BJ (cell line): ENCODE measurements at regions of chr19 and their contacts with region 1.

Region 1: DNA sequence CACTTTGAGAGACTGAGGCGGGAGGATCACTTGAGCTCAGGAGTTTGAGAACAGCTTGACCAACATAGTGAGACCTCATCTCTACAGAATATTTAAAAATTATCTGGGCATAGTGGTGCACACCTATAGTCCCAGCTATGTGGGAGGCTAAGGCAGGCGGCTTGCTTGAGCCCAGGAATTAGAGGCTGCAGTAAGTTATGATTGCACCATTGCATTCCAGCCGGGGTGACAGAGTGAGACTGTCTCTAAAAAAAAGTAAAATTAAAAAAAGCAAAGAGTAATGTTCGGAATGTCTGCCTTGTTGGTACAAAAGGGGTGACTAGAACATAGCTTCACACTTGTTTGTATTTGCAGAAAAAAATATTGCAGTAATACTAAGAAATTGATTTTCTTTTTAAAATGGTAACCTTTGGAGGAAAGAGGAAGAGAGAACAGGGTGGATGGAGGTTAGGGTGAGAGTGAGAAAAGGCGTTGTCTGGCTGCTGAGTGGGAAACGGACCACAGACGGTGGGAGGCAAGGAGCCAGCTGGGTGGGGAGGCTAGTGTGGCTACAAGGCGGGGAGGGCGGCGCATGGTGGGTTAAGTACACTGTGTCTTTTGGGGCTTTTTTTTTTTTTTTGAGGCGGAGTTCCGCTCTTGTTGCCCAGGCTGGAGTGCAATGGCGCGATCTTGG is 10.2 kb downstream of the PPP1R14A start:
- DNase-seq: no peak
- H3K4me3 ChIP-seq: no peak overlapping the region
- H3K27me3 ChIP-seq: no peaks in the 10 kb centered on the region
- CTCF ChIP-seq: no peak

Region 2: DNA sequence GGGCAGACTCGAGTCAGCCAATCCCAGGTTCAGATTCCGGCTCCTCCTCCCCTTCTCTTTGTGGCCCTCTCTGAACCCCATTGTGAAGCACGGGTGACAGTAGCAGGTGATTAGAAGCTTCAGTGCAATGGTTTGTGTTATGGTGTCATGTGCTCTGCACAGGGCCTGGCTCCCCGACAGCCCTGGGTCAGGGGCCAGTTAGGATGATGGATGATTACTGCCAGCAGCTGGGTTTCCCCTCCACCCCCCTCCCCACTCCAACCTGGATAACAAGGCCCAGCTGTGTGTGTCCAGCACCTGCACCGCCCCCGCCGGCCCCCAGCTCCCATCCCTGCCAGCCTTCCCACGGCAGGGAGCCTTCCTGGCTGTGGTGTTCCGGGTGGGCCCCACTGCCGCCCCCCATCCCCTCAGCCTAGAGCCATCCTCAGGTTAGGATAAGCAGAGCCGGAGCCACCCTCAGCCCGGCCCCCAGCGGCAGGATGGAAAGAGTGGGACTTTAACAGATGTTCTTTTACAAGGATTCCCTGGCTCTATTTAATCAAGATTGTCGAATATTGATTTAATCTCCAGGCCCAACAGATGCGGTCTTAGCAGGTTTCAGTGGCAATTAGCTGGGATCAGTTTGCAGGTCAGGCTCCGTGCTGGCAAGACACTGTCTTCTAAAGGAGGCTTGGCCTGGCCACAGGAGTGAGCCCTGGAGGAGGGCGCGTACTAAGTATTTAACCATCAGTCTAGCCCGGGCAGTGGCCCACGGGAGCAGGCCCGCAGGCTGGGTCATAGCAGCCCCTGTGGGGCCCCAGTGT is 182.8 kb before region 1 on chr19:
- CTCF ChIA-PET with region 1: no interaction called
- POLR2A ChIA-PET with region 1: no interaction called
- DNase-seq: no peak
- H3K4me3 ChIP-seq: no peak overlapping the region
- H3K27me3 ChIP-seq: no peaks in the 10 kb centered on the region
- CTCF ChIP-seq: no peak

Region 3: GRCh38 chr19:38229585-38230073 is 16.3 kb before region 1 on chr19:
- CTCF ChIA-PET with region 1: interaction called, 31 read pairs
- POLR2A ChIA-PET with region 1: no interaction called
- DNase-seq: peak; percentile 54
- H3K4me3 ChIP-seq: peak overlapping the region; percentile 45
- H3K27me3 ChIP-seq: no peaks in the 10 kb centered on the region
- CTCF ChIP-seq: no peak

Region 4: DNA sequence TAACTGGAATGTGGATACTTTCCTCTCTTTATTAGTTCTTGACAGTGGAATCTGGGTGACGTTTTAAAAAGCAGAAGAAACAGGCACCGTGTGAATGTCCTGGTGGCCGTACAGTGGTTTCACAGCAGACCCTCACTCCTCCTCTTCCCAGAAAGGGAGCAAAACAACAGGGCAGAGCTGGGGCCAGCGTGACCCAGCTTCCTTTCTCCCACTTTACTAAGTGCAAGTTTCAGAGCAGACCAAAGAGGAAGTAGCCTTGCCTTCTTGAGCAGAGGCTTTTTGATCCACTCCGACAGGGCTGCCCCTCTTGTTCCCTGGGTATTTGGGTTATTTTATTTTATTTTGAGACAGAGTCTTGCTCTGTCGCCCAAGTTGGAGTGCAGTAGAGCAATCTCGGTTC is 38.5 kb after region 1 on chr19:
- CTCF ChIA-PET with region 1: interaction called, 10 read pairs
- POLR2A ChIA-PET with region 1: no interaction called
- DNase-seq: no peak
- H3K4me3 ChIP-seq: no peak overlapping the region
- H3K27me3 ChIP-seq: no peaks in the 10 kb centered on the region
- CTCF ChIP-seq: no peak

Region 5: GRCh38 chr19:38319421-38320258 is 73.7 kb after region 1 on chr19 and contains the start of gene KCNK6:
- CTCF ChIA-PET with region 1: interaction called, 37 read pairs
- POLR2A ChIA-PET with region 1: no interaction called
- DNase-seq: no peak
- H3K4me3 ChIP-seq: peak within 1 kb of the TSS; percentile 72
- H3K27me3 ChIP-seq: no peaks in the 10 kb centered on the region
- CTCF ChIP-seq: no peak
- polyA plus RNA-seq, gene KCNK6: 15.6 and 16.5 TPM in 2 replicates

Region 6: GRCh38 chr19:38326591-38326990 is 80.6 kb after region 1 on chr19:
- CTCF ChIA-PET with region 1: interaction called, 41 read pairs
- POLR2A ChIA-PET with region 1: no interaction called
- DNase-seq: no peak
- H3K4me3 ChIP-seq: no peak overlapping the region
- H3K27me3 ChIP-seq: no peaks in the 10 kb centered on the region
- CTCF ChIP-seq: no peak

Region 7: GRCh38 chr19:38335949-38336637 is 90.1 kb after region 1 on chr19:
- CTCF ChIA-PET with region 1: interaction called, 63 read pairs
- POLR2A ChIA-PET with region 1: no interaction called
- DNase-seq: peak; percentile 80
- H3K4me3 ChIP-seq: peak overlapping the region; percentile 76
- H3K27me3 ChIP-seq: no peaks in the 10 kb centered on the region
- CTCF ChIP-seq: no peak

Region 8: GRCh38 chr19:38387550-38388348 is 141.8 kb after region 1 on chr19 and contains the start of gene GGN:
- CTCF ChIA-PET with region 1: interaction called, 11 read pairs
- POLR2A ChIA-PET with region 1: interaction called, 4 read pairs
- DNase-seq: peak; percentile 74
- H3K4me3 ChIP-seq: peak within 1 kb of the TSS; percentile 91
- H3K27me3 ChIP-seq: no peaks in the 10 kb centered on the region
- CTCF ChIP-seq: no peak
- polyA plus RNA-seq, gene GGN: 0.44 and 0.64 TPM in 2 replicates